Prostate gland (tissue), 2 donors: ENCODE measurements at regions of chr4 and their contacts with region 1.

Region 1: GRCh38 chr4:26061248-26061986 is 147.4 kb downstream of the SMIM20 start:
- DNase-seq: no peak
- H3K4me3 ChIP-seq: no peak overlapping the region
- H3K27ac ChIP-seq: no peak overlapping the region
- H3K4me1 ChIP-seq: no peaks in the 10 kb centered on the region
- H3K27me3 ChIP-seq: no peaks in the 10 kb centered on the region
- CTCF ChIP-seq: peak in 1 of 4 experiments; percentile 46
- POLR2A ChIP-seq: no peak

Region 2: DNA sequence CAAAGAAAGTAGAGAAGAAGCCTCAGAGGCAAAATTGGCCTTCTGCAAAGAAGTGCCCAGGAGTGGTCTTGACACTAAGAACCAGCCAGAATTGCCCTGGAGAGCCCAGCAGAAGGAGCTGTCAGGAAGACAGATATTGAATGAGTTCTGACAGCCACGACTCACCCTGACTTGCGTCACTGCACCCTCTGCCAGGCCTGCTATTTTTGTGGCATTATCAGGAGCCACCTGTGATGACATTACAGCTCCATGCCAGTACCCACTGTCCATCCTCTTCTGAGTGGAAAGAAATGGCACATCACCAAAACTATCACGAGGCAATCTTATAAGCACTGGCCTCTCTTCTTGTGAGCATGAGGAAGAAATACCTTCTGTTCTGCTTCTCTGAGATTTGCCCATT is 79.7 kb before region 1 on chr4:
- intact Hi-C with region 1: loop called (anchors 10 kb)
- DNase-seq: no peak
- H3K4me3 ChIP-seq: no peak overlapping the region
- H3K27ac ChIP-seq: no peak overlapping the region
- H3K4me1 ChIP-seq: no peaks in the 10 kb centered on the region
- H3K27me3 ChIP-seq: no peaks in the 10 kb centered on the region
- CTCF ChIP-seq: no peak
- POLR2A ChIP-seq: no peak

Region 3: GRCh38 chr4:26342328-26343037 is 281.1 kb after region 1 on chr4:
- intact Hi-C with region 1: no loop called
- DNase-seq: no peak
- H3K4me3 ChIP-seq: no peak overlapping the region
- H3K27ac ChIP-seq: no peak overlapping the region
- H3K4me1 ChIP-seq: no peaks in the 10 kb centered on the region
- H3K27me3 ChIP-seq: no peaks in the 10 kb centered on the region
- CTCF ChIP-seq: no peak
- POLR2A ChIP-seq: no peak

Region 4: DNA sequence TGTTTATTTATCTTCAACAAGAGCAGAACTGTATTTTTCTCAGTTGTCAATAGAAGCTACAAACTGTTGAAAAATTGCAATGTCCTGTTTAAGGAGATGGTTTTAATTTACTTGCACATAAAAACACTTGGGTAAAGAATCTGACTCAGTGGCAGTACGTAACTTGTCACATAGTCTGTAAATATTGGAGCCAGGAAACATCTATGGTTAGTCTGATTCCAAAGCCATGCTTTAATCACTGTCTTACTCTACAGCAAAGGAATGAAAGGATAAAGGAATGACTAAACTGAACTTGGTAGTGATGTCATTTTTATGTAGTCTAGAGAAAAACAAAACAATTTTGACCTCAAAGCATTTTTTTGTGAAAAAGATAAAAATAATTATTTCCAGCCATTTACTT is 1336.5 kb after region 1 on chr4:
- intact Hi-C with region 1: no loop called
- DNase-seq: no peak
- H3K4me3 ChIP-seq: no peak overlapping the region
- H3K27ac ChIP-seq: no peak overlapping the region
- H3K4me1 ChIP-seq: no peaks in the 10 kb centered on the region
- H3K27me3 ChIP-seq: no peaks in the 10 kb centered on the region
- CTCF ChIP-seq: no peak
- POLR2A ChIP-seq: no peak